SK-N-SH (cell line): ENCODE measurements at regions of chr5 and their contacts with region 1.

Region 1: GRCh38 chr5:177071666-177072385 is 14.9 kb upstream of the FGFR4 start:
- DNase-seq: peak; percentile 74
- H3K4me3 ChIP-seq: no peak overlapping the region
- H3K27ac ChIP-seq: no peak overlapping the region
- H3K4me1 ChIP-seq: no peaks in the 10 kb centered on the region; a peak in 1 of 4 replicates
- H3K27me3 ChIP-seq: no peaks in the 10 kb centered on the region
- CTCF ChIP-seq: peak; percentile 92
- EP300 ChIP-seq: no peak
- RAD21 ChIP-seq: peak; percentile 77

Region 2: GRCh38 chr5:176887252-176887849 is 184.5 kb before region 1 on chr5:
- CTCF ChIA-PET with region 1: no interaction called
- POLR2A ChIA-PET with region 1: no interaction called
- DNase-seq: peak; percentile 32
- H3K4me3 ChIP-seq: no peak overlapping the region
- H3K27ac ChIP-seq: no peak overlapping the region
- H3K4me1 ChIP-seq: peaks cover 0 to 29% of the 10 kb centered on the region in 2 experiments; a peak in 2 of 4 replicates
- H3K27me3 ChIP-seq: no peaks in the 10 kb centered on the region; the same call in 1 of the 2 replicates
- CTCF ChIP-seq: no peak
- EP300 ChIP-seq: no peak
- RAD21 ChIP-seq: no peak; the same call in 1 of the 2 replicates

Region 3: DNA sequence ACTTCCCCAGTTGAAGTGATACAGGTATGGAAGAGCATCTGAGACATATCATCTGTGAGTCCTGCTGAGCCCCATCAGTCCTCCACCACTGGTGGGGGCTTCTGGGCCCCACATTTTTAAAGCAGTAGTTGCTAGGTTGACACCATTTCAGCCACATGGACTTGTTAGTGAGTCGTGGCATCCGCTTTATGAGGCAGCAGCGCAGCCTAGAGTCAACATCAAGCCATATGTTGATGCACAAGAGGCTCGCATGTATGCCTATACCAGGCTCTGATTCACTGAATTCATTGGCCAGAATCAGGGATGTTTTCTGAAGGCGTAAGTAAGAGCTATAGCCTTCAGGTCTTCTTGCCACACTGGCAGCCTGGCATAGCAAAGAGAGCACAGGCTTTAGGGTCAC is 22.5 kb before region 1 on chr5:
- CTCF ChIA-PET with region 1: interaction called, 17 read pairs
- POLR2A ChIA-PET with region 1: no interaction called
- DNase-seq: no peak
- H3K4me3 ChIP-seq: peak overlapping the region in 1 of 2 experiments; percentile 1; a peak in 1 of 4 replicates
- H3K27ac ChIP-seq: no peak overlapping the region
- H3K4me1 ChIP-seq: no peaks in the 10 kb centered on the region
- H3K27me3 ChIP-seq: no peaks in the 10 kb centered on the region
- CTCF ChIP-seq: no peak
- EP300 ChIP-seq: no peak
- RAD21 ChIP-seq: peak; percentile 25; the same call in 1 of the 2 replicates

Region 4: DNA sequence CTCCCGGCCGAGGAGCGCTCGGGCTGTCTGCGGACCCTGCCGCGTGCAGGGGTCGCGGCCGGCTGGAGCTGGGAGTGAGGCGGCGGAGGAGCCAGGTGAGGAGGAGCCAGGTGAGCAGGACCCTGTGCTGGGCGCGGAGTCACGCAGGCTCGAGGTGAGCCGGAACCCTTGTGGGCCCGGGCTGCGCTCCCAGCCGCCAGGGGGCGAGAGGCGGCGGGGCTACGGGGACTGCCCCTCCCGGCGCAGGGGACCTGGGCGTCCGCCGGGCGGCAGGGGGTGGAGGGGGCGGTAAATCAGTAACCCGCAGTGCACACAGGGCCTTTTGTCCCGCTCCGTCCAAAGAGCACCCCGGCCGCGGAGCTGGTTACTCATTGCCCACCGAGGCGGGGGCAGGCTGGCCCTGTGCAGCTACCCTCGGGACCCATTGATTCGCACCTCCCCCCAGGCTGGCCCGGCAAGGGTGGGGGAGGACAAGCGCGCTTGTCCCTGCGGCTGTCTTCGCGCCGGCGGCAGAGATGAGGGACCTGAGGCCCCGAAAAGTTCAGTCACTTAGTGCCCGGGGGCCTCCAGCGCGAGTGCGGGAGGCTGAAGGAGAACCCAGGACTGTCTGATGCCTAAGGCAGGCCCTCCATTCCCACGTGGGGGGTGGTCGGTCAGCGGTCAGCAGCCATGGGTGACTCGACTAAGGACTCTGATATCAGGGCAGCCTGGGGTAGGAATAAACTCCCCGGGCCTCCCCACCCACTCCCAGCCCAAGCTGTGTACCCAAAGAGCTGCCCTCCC is 15.3 kb after region 1 on chr5:
- CTCF ChIA-PET with region 1: interaction called, 59 read pairs
- POLR2A ChIA-PET with region 1: no interaction called
- DNase-seq: peak; percentile 88
- H3K4me3 ChIP-seq: peak overlapping the region; percentile 39 to 47; a peak in 3 of 4 replicates
- H3K27ac ChIP-seq: no peak overlapping the region
- H3K4me1 ChIP-seq: peaks cover 0 to 9% of the 10 kb centered on the region in 2 experiments; a peak in 1 of 4 replicates
- H3K27me3 ChIP-seq: no peaks in the 10 kb centered on the region
- CTCF ChIP-seq: peak; percentile 58
- EP300 ChIP-seq: no peak
- RAD21 ChIP-seq: no peak

Region 5: GRCh38 chr5:177094224-177095087 is 22.6 kb after region 1 on chr5:
- CTCF ChIA-PET with region 1: interaction called, 37 read pairs
- POLR2A ChIA-PET with region 1: no interaction called
- DNase-seq: peak; percentile 66
- H3K4me3 ChIP-seq: no peak overlapping the region
- H3K27ac ChIP-seq: no peak overlapping the region
- H3K4me1 ChIP-seq: peaks cover 0 to 16% of the 10 kb centered on the region in 2 experiments; a peak in 1 of 4 replicates
- H3K27me3 ChIP-seq: no peaks in the 10 kb centered on the region
- CTCF ChIP-seq: no peak
- EP300 ChIP-seq: no peak
- RAD21 ChIP-seq: no peak